Activated B cell treated with CpG ODN at 0.5 μM for 24 hours (primary cell): ENCODE measurements at regions of chr7 and their contacts with region 1.

Region 1: DNA sequence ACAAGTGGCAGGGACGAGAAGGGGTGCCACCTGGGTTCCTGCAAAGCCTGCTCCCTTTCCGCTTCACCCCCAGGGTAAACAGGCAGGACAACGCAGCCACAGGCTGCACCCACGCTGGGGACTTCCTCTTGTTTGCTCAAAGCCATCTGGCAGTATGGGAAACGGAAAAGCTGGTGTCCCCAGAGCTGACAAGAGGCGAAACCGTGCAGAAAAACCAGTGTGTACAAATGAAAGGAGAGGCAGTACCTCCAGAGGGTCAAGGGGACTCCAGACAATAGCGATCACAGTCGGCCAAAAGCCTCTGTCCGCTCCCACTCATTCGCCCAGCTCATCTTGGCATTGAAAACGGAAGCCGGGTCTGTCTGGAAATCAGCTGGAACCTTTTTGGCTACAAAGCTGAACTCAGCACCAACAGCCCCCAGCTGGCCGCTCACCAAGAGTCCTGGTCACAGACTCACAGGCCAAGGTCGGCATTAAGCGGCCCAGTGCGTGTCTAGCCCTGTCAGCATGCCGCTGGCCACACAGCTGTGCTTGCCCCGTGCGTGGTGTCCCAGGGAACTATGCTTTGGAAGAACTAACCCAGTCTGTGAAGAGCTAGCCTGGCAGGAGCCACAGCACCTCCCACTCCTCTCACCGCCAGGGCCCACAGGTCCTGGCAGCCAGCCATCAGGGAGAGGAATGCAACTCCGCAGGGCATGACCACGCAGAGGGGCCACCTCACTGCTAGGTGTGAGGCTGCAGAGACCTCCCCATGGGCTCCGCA is 10.4 kb downstream of the TNS3 start:
- DNase-seq: no peak
- ATAC-seq: peak; percentile 32
- H3K4me3 Mint-ChIP-seq: peak overlapping the region; percentile 75
- H3K27ac Mint-ChIP-seq: peak overlapping the region; percentile 87
- H3K4me1 Mint-ChIP-seq: peaks cover 90% of the 10 kb centered on the region
- H3K27me3 Mint-ChIP-seq: no peaks in the 10 kb centered on the region
- CTCF ChIP-seq: no peak

Region 2: GRCh38 chr7:47543706-47544105 is 27.8 kb before region 1 on chr7:
- CTCF ChIA-PET with region 1: no interaction called
- POLR2A ChIA-PET with region 1: interaction called, 3 read pairs
- intact Hi-C with region 1: loop called (anchors 2 kb)
- DNase-seq: peak; percentile 40
- ATAC-seq: peak; percentile 94
- H3K4me3 Mint-ChIP-seq: peak overlapping the region; percentile 36
- H3K27ac Mint-ChIP-seq: peak overlapping the region; percentile 47
- H3K4me1 Mint-ChIP-seq: peaks cover 47% of the 10 kb centered on the region
- H3K27me3 Mint-ChIP-seq: no peaks in the 10 kb centered on the region
- CTCF ChIP-seq: no peak

Region 3: DNA sequence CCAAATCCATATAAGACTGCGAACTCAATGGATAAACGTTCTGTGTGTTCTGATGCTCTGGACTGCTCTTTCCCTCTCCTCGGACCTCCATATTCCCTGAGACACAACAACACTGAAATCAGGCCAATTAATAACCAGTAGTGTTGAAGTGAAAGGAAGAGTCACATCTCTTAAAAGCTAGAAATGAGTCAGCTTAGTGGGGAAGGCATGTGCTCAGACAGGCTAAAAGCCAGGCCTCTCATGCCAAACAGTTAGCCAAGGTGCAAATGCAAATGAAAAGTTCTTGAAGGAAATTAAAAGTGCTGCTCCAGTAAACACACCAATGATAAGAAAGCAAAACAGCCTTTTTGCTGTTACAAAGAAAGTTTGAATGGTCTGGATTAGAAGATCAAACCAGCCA is 18.9 kb before region 1 on chr7:
- CTCF ChIA-PET with region 1: no interaction called
- POLR2A ChIA-PET with region 1: interaction called, 4 read pairs
- intact Hi-C with region 1: loop called (anchors 2 kb)
- DNase-seq: no peak
- ATAC-seq: peak; percentile 94
- H3K4me3 Mint-ChIP-seq: peak overlapping the region; percentile 51
- H3K27ac Mint-ChIP-seq: peak overlapping the region; percentile 74
- H3K4me1 Mint-ChIP-seq: peaks cover 34% of the 10 kb centered on the region
- H3K27me3 Mint-ChIP-seq: no peaks in the 10 kb centered on the region
- CTCF ChIP-seq: no peak